ENCODE measurements at regions of chr19 and their contacts with region 1.

Region 1: GRCh38 chr19:12669270-12670158 is 2.9 kb downstream of the WDR83 start:
- DNase-seq: peak; percentile 67
- ATAC-seq: peak; percentile 50
- H3K4me3 ChIP-seq: peak overlapping the region; percentile 77 to 96 (median 96)
- H3K27ac ChIP-seq: peak overlapping the region; percentile 88
- H3K4me1 ChIP-seq: peaks cover 43% of the 10 kb centered on the region
- H3K27me3 ChIP-seq: no peaks in the 10 kb centered on the region; a peak in 1 of 5 replicates
- CTCF ChIP-seq: no peak
- EP300 ChIP-seq: peak in 1 of 2 experiments; percentile 22; a peak in 1 of 4 replicates
- POLR2A ChIP-seq: peak; percentile 66 to 77
- RAD21 ChIP-seq: no peak

Region 2: GRCh38 chr19:12564016-12564664 is 105.4 kb before region 1 on chr19:
- CTCF ChIA-PET with region 1: interaction called, 17 read pairs
- POLR2A ChIA-PET with region 1: no interaction called
- in situ Hi-C with region 1: loop called (anchors 5 kb)
- intact Hi-C with region 1: loop called (anchors 1 kb)
- DNase-seq: peak; percentile 71
- ATAC-seq: peak; percentile 85
- H3K4me3 ChIP-seq: no peak overlapping the region
- H3K27ac ChIP-seq: no peak overlapping the region
- H3K4me1 ChIP-seq: no peaks in the 10 kb centered on the region
- H3K27me3 ChIP-seq: no peaks in the 10 kb centered on the region; a peak in 1 of 5 replicates
- CTCF ChIP-seq: peak; percentile 97
- EP300 ChIP-seq: no peak
- POLR2A ChIP-seq: no peak
- RAD21 ChIP-seq: peak; percentile 87

Region 3: DNA sequence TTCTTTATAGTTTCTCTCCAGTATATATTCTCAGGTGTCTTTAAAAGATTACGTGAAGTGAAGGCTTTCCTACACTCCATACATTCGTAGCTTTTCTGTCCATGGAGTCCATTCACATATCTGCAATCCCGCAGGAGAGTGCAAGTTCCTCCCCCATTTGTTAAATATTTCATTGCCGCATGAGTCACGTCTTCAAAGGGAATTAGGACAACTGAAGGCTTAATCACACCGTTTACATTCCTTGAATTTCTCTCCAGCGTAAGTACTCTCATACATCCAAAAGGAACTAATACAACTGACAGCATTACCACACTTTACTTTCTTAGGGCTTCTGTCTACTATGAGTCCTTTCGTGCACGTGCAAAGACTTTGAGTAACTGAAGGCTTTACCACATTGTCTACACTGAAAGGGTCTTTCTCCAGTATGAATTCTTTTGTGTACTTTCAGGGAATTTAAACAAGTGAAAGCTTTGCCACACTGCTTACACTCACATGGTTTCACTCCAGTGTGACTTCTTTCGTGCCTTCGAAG is 89.3 kb before region 1 on chr19:
- CTCF ChIA-PET with region 1: no interaction called
- POLR2A ChIA-PET with region 1: no interaction called
- in situ Hi-C with region 1: no loop called
- intact Hi-C with region 1: no loop called
- DNase-seq: peak; percentile 78
- ATAC-seq: no peak; the same call in 2 of the 3 replicates
- H3K4me3 ChIP-seq: no peak overlapping the region
- H3K27ac ChIP-seq: peak overlapping the region; percentile 37
- H3K4me1 ChIP-seq: peaks cover 31% of the 10 kb centered on the region
- H3K27me3 ChIP-seq: no peaks in the 10 kb centered on the region
- CTCF ChIP-seq: no peak
- EP300 ChIP-seq: peak in 1 of 2 experiments; percentile 37; a peak in 1 of 4 replicates
- POLR2A ChIP-seq: no peak
- RAD21 ChIP-seq: no peak

Region 4: DNA sequence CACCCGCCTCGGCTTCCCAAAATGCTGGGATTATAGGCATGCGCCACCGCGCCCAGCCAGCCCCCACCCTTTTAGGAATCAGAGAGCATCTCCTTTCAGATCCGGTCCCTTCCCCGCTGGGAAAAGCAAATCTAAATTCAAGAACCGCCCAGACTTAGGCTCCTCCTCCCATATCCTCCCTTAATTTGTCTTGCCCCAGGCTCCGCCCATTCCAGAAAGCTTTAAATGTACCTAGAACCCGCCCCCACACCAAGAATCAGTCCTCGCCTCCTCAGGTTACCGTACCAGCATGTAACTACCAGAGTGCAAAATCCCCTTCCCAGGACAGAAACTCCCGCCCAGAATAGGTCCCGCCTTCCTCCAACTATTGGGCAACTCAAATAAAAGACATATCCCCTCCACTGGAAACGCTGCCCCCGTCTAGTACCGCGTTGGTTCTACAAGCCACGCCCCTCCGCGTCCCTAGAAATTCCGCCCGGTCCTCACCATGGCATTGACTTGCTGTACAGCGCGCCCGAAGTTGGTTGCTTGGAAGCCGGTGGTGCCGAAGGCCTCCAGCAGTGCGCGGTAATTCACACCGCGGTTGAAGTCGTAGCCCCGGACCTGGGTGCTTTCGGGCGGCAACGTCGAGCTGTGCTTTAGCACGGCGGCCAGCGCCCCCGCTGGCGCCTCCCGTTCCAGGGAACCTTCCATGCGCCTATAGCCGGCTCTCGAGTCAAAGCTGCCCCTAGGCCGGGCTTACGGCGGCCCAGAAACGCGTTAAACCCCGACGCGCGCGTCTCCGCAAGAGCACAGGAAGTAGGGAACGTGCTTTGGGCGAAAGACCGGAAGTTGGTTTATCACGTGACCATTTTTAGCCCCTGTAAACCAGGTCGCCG is 11.8 kb after region 1 on chr19 and contains the start of gene DHPS:
- CTCF ChIA-PET with region 1: no interaction called
- POLR2A ChIA-PET with region 1: interaction called, 13 read pairs
- in situ Hi-C with region 1: no loop called
- intact Hi-C with region 1: no loop called
- DNase-seq: peak; percentile 95
- ATAC-seq: peak; percentile 85
- H3K4me3 ChIP-seq: peak within 1 kb of the TSS; percentile 64 to 85 (median 75)
- H3K27ac ChIP-seq: peak within 1 kb of the TSS; percentile 99
- H3K4me1 ChIP-seq: peaks cover 16% of the 10 kb centered on the region
- H3K27me3 ChIP-seq: no peaks in the 10 kb centered on the region; a peak in 1 of 5 replicates
- CTCF ChIP-seq: peak; percentile 23
- EP300 ChIP-seq: 0 out of 4 replicates have a peak, but pooled peaks of 1 of the 2 experiments have one; percentile 22
- POLR2A ChIP-seq: peak; percentile 72 to 96
- RAD21 ChIP-seq: peak; percentile 49; the same call in 1 of the 2 replicates
- total RNA-seq, gene DHPS: 34.8 and 43.3 TPM in 2 replicates

Region 5: GRCh38 chr19:12716861-12717260 is 47.3 kb after region 1 on chr19:
- CTCF ChIA-PET with region 1: no interaction called
- POLR2A ChIA-PET with region 1: no interaction called
- in situ Hi-C with region 1: no loop called
- intact Hi-C with region 1: no loop called
- DNase-seq: peak; percentile 75
- ATAC-seq: peak; percentile 75
- H3K4me3 ChIP-seq: no peak overlapping the region
- H3K27ac ChIP-seq: no peak overlapping the region
- H3K4me1 ChIP-seq: peaks cover 9% of the 10 kb centered on the region
- H3K27me3 ChIP-seq: no peaks in the 10 kb centered on the region; a peak in 1 of 5 replicates
- CTCF ChIP-seq: peak; percentile 72
- EP300 ChIP-seq: no peak
- POLR2A ChIP-seq: no peak
- RAD21 ChIP-seq: peak; percentile 65